T-cell (primary cell): ENCODE measurements at regions of chr1 and their contacts with region 1.

Region 1: DNA sequence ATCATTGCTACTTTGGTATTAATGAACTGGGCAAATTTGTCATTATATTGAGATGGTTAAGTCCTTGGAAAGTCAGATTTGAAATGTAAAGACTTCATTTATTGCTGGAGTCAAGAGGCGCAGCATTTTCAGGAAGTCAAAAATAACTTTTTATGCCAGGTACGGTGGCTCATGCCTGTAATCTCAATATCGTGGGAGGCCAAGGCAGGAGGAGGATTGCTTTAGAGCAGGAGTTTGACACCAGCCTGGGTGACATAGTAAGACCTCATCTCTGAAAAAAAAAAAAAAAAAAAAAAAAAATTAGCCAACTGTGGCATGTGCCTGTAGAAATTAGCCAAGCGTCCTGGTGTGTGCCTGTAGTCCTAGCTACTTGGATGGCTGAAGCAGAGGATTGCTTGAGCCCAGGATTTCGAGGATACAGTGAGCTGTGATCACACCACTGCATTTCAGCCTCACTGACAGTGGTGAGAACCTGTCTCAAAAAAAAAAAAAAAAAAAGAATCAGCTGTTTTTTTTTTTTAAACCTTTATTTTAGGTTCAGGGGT is 5.5 kb downstream of the HIPK1 start:
- DNase-seq: no peak
- ATAC-seq: no peak
- H3K4me3 ChIP-seq: no peak overlapping the region
- H3K4me3 Mint-ChIP-seq: peak overlapping the region; percentile 22 to 91 (median 89)
- H3K27ac ChIP-seq: peak overlapping the region; percentile 95
- H3K27ac Mint-ChIP-seq: peak overlapping the region; percentile 94 to 99
- H3K4me1 ChIP-seq: peaks cover 52 to 64% of the 10 kb centered on the region in 2 experiments
- H3K4me1 Mint-ChIP-seq: peaks cover 88 to 91% (median 89%) of the 10 kb centered on the region in 3 donors
- H3K27me3 ChIP-seq: no peaks in the 10 kb centered on the region
- H3K27me3 Mint-ChIP-seq: no peaks in the 10 kb centered on the region

Region 2: GRCh38 chr1:112359961-112360767 is 1574.4 kb before region 1 on chr1:
- CTCF ChIA-PET with region 1: no interaction called
- POLR2A ChIA-PET with region 1: no interaction called
- DNase-seq: no peak
- ATAC-seq: no peak
- H3K4me3 ChIP-seq: no peak overlapping the region
- H3K4me3 Mint-ChIP-seq: no peak overlapping the region
- H3K27ac ChIP-seq: no peak overlapping the region
- H3K27ac Mint-ChIP-seq: no peak overlapping the region
- H3K4me1 ChIP-seq: no peaks in the 10 kb centered on the region
- H3K4me1 Mint-ChIP-seq: no peaks in the 10 kb centered on the region
- H3K27me3 ChIP-seq: peaks cover 0 to 20% of the 10 kb centered on the region in 2 experiments
- H3K27me3 Mint-ChIP-seq: peaks cover 35 to 43% of the 10 kb centered on the region in 2 donors

Region 3: GRCh38 chr1:112538883-112539282 is 1395.7 kb before region 1 on chr1:
- CTCF ChIA-PET with region 1: no interaction called
- POLR2A ChIA-PET with region 1: interaction called in 1 of 2 experiments, 14 read pairs
- DNase-seq: no peak
- ATAC-seq: no peak
- H3K4me3 ChIP-seq: no peak overlapping the region
- H3K4me3 Mint-ChIP-seq: no peak overlapping the region
- H3K27ac ChIP-seq: no peak overlapping the region
- H3K27ac Mint-ChIP-seq: no peak overlapping the region
- H3K4me1 ChIP-seq: no peaks in the 10 kb centered on the region
- H3K4me1 Mint-ChIP-seq: no peaks in the 10 kb centered on the region
- H3K27me3 ChIP-seq: no peaks in the 10 kb centered on the region
- H3K27me3 Mint-ChIP-seq: no peaks in the 10 kb centered on the region

Region 4: DNA sequence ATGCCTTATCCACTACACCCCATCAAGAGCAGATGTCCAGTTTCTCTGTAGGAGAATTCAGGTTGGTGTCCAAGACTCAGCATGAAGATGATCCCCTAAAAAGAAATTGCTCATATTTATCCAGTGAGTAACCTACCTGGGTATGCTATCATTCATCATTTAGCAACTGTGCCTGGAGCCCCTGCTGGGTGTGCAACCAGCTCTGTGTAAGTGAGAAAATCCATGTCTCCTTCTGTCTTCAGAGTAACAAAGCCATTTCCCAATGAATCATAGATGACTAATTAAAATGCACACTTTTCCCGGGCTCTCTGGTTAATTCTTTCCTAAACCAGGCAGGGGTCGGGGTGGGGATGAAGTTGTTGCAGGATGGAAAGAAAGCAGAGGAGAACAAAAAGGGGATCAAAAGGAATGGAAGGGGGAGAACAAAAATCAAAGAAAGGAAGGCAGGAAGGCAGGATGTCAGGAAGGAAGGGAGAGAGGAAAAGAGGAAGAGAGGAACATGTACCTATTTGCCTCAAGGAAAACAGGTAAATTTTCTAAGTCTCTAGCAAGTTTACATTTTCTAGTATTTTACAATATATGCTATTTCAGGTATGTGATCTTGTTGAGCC is 80.6 kb after region 1 on chr1:
- CTCF ChIA-PET with region 1: no interaction called
- POLR2A ChIA-PET with region 1: no interaction called
- DNase-seq: no peak
- ATAC-seq: no peak
- H3K4me3 ChIP-seq: no peak overlapping the region
- H3K4me3 Mint-ChIP-seq: no peak overlapping the region
- H3K27ac ChIP-seq: no peak overlapping the region
- H3K27ac Mint-ChIP-seq: no peak overlapping the region
- H3K4me1 ChIP-seq: no peaks in the 10 kb centered on the region
- H3K4me1 Mint-ChIP-seq: no peaks in the 10 kb centered on the region
- H3K27me3 ChIP-seq: peaks cover 0 to 7% of the 10 kb centered on the region in 2 experiments
- H3K27me3 Mint-ChIP-seq: peaks cover 12 to 15% of the 10 kb centered on the region in 2 donors